Mammary epithelial cell (primary cell): ENCODE measurements at regions of chr3 and their contacts with region 1.

Region 1: GRCh38 chr3:165854696-165855095 is 17.5 kb upstream of the BCHE start:
- DNase-seq: peak; percentile 13
- H3K4me3 ChIP-seq: no peak overlapping the region
- H3K27ac ChIP-seq: no peak overlapping the region
- H3K4me1 ChIP-seq: peaks cover 12% of the 10 kb centered on the region
- H3K27me3 ChIP-seq: peaks cover 3% of the 10 kb centered on the region
- CTCF ChIP-seq: peak; percentile 53 to 62

Region 2: DNA sequence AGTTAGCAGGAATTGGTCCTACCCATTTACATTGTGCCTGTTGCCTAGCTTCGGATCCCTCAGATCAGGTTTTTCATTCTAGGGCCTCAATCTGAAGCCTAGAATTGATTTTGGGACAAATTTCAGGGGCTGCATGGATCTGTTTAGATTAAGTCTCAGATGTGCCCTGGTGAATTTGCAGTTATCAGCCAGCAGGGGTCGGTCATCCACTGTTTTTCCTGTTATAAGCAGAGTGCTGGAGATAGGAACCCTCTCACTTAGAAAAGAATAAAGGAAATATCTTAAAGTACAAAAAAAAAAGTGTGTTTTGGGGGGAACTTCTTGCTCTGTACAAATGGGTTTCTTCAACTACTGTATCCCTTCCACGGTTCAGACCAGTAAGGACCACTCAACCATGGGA is 229.9 kb before region 1 on chr3:
- CTCF ChIA-PET with region 1: no interaction called
- dilution Hi-C with region 1: no loop called
- in situ Hi-C with region 1: no loop called
- intact Hi-C with region 1: loop called (anchors 5 kb)
- DNase-seq: no peak
- H3K4me3 ChIP-seq: no peak overlapping the region
- H3K27ac ChIP-seq: no peak overlapping the region
- H3K4me1 ChIP-seq: no peaks in the 10 kb centered on the region
- H3K27me3 ChIP-seq: no peaks in the 10 kb centered on the region
- CTCF ChIP-seq: peak; percentile 60 to 71

Region 3: GRCh38 chr3:166444771-166445170 is 590.1 kb after region 1 on chr3:
- CTCF ChIA-PET with region 1: no interaction called
- dilution Hi-C with region 1: no loop called
- in situ Hi-C with region 1: no loop called
- intact Hi-C with region 1: loop called (anchors 10 kb)
- DNase-seq: peak; percentile 94
- H3K4me3 ChIP-seq: peak overlapping the region in 2 of 3 experiments; percentile 6 to 8
- H3K27ac ChIP-seq: peak overlapping the region; percentile 62
- H3K4me1 ChIP-seq: peaks cover 34% of the 10 kb centered on the region
- H3K27me3 ChIP-seq: no peaks in the 10 kb centered on the region
- CTCF ChIP-seq: no peak

Region 4: GRCh38 chr3:166785872-166786271 is 931.2 kb after region 1 on chr3:
- CTCF ChIA-PET with region 1: no interaction called
- dilution Hi-C with region 1: no loop called
- in situ Hi-C with region 1: no loop called
- intact Hi-C with region 1: no loop called
- DNase-seq: no peak
- H3K4me3 ChIP-seq: no peak overlapping the region
- H3K27ac ChIP-seq: no peak overlapping the region
- H3K4me1 ChIP-seq: no peaks in the 10 kb centered on the region
- H3K27me3 ChIP-seq: no peaks in the 10 kb centered on the region
- CTCF ChIP-seq: no peak

Region 5: GRCh38 chr3:167032261-167032876 is 1177.7 kb after region 1 on chr3:
- CTCF ChIA-PET with region 1: no interaction called
- dilution Hi-C with region 1: no loop called
- in situ Hi-C with region 1: no loop called
- intact Hi-C with region 1: loop called (anchors 2 kb)
- DNase-seq: peak; percentile 36
- H3K4me3 ChIP-seq: no peak overlapping the region
- H3K27ac ChIP-seq: no peak overlapping the region
- H3K4me1 ChIP-seq: no peaks in the 10 kb centered on the region
- H3K27me3 ChIP-seq: peaks cover 2% of the 10 kb centered on the region
- CTCF ChIP-seq: peak; percentile 51 to 70